Activated B cell treated with CpG ODN at 0.5 μM for 24 hours (primary cell): ENCODE measurements at regions of chr13 and their contacts with region 1.

Region 1: GRCh38 chr13:77528834-77529505 is 6.5 kb upstream of the SCEL start:
- DNase-seq: no peak
- ATAC-seq: no peak
- H3K4me3 Mint-ChIP-seq: no peak overlapping the region
- H3K27ac Mint-ChIP-seq: no peak overlapping the region
- H3K4me1 Mint-ChIP-seq: no peaks in the 10 kb centered on the region
- H3K27me3 Mint-ChIP-seq: no peaks in the 10 kb centered on the region
- CTCF ChIP-seq: no peak

Region 2: GRCh38 chr13:77513719-77514335 is 15.1 kb before region 1 on chr13:
- CTCF ChIA-PET with region 1: no interaction called
- POLR2A ChIA-PET with region 1: no interaction called
- intact Hi-C with region 1: loop called (anchors 2 kb)
- DNase-seq: no peak
- ATAC-seq: peak; percentile 93
- H3K4me3 Mint-ChIP-seq: peak overlapping the region; percentile 63
- H3K27ac Mint-ChIP-seq: peak overlapping the region; percentile 80
- H3K4me1 Mint-ChIP-seq: peaks cover 41% of the 10 kb centered on the region
- H3K27me3 Mint-ChIP-seq: no peaks in the 10 kb centered on the region
- CTCF ChIP-seq: no peak